Activated T-helper 1 cell treated with anti-CD3 and anti-CD28 coated beads, Interleukin-12 subunit alpha, Interleukin-12 subunit beta, Interleukin-2, Interleukin-4 antibody, amounts not matched to agents 30 ng/mL and 10 ng/mL and 1 ng/mL, durations not matched to agents 14 hours and 24 hours and 36 hours (primary cell): ENCODE measurements at regions of chr6 and their contacts with region 1.

Region 1: GRCh38 chr6:138692058-138692977 is 81.3 kb upstream of the CCDC28A start:
- DNase-seq: peak; percentile 44
- H3K4me3 Mint-ChIP-seq: peak overlapping the region; percentile 75
- H3K27ac Mint-ChIP-seq: peak overlapping the region; percentile 11
- H3K4me1 Mint-ChIP-seq: peaks cover 11% of the 10 kb centered on the region
- H3K27me3 Mint-ChIP-seq: peaks cover 50% of the 10 kb centered on the region

Region 2: GRCh38 chr6:138403801-138404661 is 288.3 kb before region 1 on chr6 and contains the start of gene HEBP2:
- intact Hi-C with region 1: loop called (anchors 2 kb)
- DNase-seq: peak; percentile 87
- H3K4me3 Mint-ChIP-seq: peak within 1 kb of the TSS; percentile 84
- H3K27ac Mint-ChIP-seq: peak within 1 kb of the TSS; percentile 59
- H3K4me1 Mint-ChIP-seq: peaks cover 18% of the 10 kb centered on the region
- H3K27me3 Mint-ChIP-seq: peaks cover 8% of the 10 kb centered on the region
- total RNA-seq, gene HEBP2: 18.9 and 21.4 TPM in 2 replicates

Region 3: DNA sequence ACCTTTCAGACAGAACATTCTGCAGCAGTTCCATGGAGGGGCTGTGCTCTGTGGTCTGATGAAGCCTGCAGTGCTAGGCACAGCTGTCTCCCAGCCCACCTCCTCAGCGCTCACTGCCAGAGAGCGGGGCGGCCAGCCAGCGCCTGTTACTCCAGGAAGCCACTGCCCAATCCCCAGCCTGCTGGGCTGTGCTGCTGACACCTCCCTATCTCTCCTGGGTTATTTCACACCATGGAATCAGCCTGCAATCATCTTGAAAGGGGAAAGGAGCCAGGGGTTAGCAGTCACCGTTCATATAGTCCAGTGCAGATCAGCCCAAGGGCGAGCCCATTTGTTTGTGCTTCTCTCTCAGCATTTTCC is 146.7 kb before region 1 on chr6:
- intact Hi-C with region 1: no loop called
- DNase-seq: no peak
- H3K4me3 Mint-ChIP-seq: no peak overlapping the region
- H3K27ac Mint-ChIP-seq: no peak overlapping the region
- H3K4me1 Mint-ChIP-seq: peaks cover 16% of the 10 kb centered on the region
- H3K27me3 Mint-ChIP-seq: peaks cover 13% of the 10 kb centered on the region

Region 4: DNA sequence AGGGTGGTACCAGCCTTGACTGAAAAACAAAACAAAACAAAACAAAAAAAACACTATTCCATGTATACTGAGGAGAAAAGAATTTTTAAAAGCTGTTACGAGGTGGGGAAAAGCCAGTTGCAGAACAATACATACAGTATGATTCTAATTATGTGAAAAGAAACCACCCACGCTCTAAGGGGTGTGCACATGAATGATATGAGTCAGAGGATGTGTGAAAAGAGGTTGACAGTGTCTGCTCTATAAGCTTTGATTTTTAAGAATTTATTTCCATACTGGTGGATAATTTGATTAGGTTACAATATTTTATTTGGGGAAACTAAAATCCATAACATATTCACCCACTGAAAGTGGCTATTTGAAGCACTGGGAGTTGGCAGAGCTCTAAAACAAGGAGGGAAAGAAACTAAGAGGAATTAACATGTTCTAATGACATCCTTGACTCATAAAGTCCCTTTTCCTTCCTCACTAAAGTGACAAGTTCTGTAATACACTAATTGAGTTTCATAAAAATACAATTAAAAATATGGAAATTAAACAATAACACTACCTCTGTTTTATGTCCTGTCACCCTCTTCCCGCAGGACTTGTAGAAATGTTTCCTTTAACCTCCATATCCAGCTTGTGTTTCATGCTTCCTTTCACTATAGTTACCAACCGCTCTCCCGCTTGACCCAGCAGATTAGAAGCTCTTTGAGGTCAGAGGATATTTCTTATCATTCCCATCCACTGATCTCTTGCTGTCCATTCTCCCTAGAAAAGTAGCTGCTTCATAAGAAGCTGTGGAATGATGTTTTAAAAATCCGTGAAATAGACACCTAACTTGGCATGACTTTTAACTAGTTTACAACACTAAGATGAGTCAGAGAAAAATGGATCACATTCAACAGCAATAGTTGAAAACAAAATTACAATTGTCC is 37.3 kb before region 1 on chr6:
- intact Hi-C with region 1: loop called (anchors 1 kb)
- DNase-seq: no peak
- H3K4me3 Mint-ChIP-seq: no peak overlapping the region
- H3K27ac Mint-ChIP-seq: no peak overlapping the region
- H3K4me1 Mint-ChIP-seq: peaks cover 20% of the 10 kb centered on the region
- H3K27me3 Mint-ChIP-seq: peaks cover 22% of the 10 kb centered on the region

Region 5: GRCh38 chr6:138765896-138766655 is 73.8 kb after region 1 on chr6:
- intact Hi-C with region 1: loop called (anchors 1 kb)
- DNase-seq: no peak
- H3K4me3 Mint-ChIP-seq: no peak overlapping the region
- H3K27ac Mint-ChIP-seq: no peak overlapping the region
- H3K4me1 Mint-ChIP-seq: peaks cover 9% of the 10 kb centered on the region
- H3K27me3 Mint-ChIP-seq: no peaks in the 10 kb centered on the region

Region 6: DNA sequence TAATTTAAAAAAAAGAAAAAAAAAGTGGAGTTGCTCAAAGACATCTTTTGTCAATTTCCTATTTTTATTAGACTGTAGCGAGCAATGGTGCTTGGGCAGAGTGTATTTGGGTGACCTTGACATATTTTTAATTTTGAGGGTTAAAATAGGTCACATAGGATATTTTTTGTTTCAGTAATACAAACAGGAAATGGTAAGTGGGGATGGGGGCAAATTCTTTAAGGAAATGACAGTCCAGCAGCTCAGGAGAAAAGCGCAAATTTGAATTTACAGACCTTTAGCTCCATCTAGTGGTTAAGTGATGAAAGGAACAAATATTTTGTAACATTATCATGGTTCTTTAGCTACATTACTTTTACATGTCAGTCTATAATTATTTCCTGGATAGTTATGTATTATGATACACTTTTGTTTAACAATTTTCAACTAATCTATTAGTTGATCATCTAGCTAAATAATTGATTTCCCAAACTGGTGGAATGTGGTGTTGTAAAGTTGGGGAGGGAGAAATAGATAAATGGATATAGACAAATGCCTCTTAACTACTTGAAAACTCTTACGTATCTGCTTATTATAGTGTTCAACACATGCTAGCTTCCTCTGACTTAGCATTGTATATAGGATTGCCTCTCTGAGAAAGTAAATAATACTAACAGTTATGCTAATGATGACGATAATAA is 672.1 kb after region 1 on chr6:
- intact Hi-C with region 1: loop called (anchors 10 kb)
- DNase-seq: no peak
- H3K4me3 Mint-ChIP-seq: no peak overlapping the region
- H3K27ac Mint-ChIP-seq: no peak overlapping the region
- H3K4me1 Mint-ChIP-seq: peaks cover 47% of the 10 kb centered on the region
- H3K27me3 Mint-ChIP-seq: peaks cover 4% of the 10 kb centered on the region